Activated CD4-positive, alpha-beta T cell treated with anti-CD3 and anti-CD28 coated beads for 36 hours (primary cell): ENCODE measurements at regions of chr16 and their contacts with region 1.

Region 1: DNA sequence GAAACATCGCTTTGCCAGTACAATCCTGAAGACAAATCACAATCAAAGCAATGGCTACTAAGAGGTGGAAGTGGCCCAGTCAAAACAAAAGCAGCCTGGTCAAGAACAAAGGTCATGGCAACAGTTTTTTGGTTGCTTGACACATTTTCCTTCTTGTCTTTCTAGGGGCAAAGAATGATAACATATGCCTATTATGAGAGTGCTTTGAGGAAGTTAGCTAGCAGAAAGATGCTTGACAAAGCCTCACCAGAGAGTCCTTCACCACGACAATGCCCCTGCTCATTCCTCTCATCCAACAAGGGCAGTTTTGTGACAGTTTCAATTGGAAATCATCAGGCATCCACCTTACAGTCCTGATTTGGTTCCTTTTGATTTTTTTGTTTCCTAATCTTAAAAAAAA is 31.8 kb upstream of the N4BP1 start:
- DNase-seq: no peak
- ATAC-seq: no peak
- H3K4me3 Mint-ChIP-seq: no peak overlapping the region
- H3K27ac Mint-ChIP-seq: no peak overlapping the region
- H3K4me1 Mint-ChIP-seq: no peaks in the 10 kb centered on the region
- H3K27me3 Mint-ChIP-seq: peaks cover 6% of the 10 kb centered on the region

Region 2: GRCh38 chr16:48704710-48705109 is 62.9 kb after region 1 on chr16:
- CTCF ChIA-PET with region 1: no interaction called
- POLR2A ChIA-PET with region 1: no interaction called
- intact Hi-C with region 1: loop called in 1 of 2 experiments (anchors 10 kb)
- DNase-seq: no peak
- ATAC-seq: no peak
- H3K4me3 Mint-ChIP-seq: no peak overlapping the region
- H3K27ac Mint-ChIP-seq: no peak overlapping the region
- H3K4me1 Mint-ChIP-seq: no peaks in the 10 kb centered on the region
- H3K27me3 Mint-ChIP-seq: peaks cover 13% of the 10 kb centered on the region